Breast epithelium (tissue), 4 donors: ENCODE measurements at regions of chr13 and their contacts with region 1.

Region 1: DNA sequence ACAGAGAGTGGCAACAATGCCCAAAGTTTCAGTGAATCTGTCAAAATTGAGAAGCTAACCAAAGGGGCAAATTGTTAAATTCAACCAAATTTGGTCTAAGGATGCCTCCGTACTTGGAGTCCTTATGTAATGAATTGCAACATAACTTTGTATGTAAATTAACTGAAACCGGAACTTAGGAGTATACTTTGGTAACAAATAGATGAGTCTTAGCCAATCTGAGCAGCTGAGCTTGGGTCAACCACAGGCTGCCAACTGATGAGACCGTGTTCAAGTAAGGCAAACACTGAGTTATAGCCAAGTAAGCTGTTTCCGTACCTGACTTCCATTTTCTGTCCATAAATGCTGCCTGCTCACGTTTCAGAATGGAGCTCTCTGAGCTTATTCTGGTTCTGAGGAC is 5.3 kb downstream of the VWA8 start:
- DNase-seq: no peak
- H3K4me3 ChIP-seq: no peak overlapping the region
- H3K27ac ChIP-seq: no peak overlapping the region
- H3K4me1 ChIP-seq: no peaks in the 10 kb centered on the region
- H3K27me3 ChIP-seq: no peaks in the 10 kb centered on the region
- CTCF ChIP-seq: no peak
- POLR2A ChIP-seq: no peak

Region 2: DNA sequence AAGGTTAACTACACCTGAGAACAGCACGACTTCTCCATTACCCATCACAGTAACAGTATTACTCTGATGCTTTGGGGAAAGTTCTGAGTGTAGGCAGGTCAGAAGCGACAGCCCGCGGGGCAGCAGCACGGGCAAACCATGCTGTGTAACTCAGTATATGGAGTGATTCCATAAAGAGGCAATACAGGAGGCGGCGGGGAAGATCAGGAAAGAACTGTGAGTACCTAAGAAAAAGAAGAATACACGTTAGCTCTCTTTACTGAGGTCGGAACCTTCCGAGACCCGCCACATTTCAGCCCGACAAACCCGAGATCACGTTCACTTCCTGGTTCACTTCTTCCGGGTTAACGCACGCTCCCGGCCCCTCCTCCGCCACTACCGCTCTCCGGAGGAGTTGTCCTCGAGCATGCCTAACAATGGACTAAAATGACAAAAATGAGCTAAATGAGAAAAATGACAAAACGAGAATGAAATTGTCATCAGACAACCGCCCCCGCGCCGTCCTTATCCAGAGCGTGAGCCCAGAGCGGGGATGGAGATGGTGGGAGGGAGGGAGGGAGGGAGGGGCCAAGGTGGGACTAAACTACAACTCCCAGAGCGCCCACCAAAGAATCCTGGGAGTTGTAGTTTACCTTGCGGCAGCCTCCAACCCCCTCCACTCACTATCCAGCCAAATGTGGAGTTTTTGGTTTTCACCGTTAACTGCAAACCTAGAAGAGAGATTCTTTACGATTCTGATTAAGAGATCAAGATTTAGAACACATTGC is 692.2 kb before region 1 on chr13 and contains the start of gene MTRF1:
- intact Hi-C with region 1: no loop called
- DNase-seq: peak; percentile 63 to 67
- H3K4me3 ChIP-seq: peak within 1 kb of the TSS; percentile 46 to 82 (median 69)
- H3K27ac ChIP-seq: peak within 1 kb of the TSS; percentile 84 to 87
- H3K4me1 ChIP-seq: peaks cover 0 to 5% of the 10 kb centered on the region in 2 donors
- H3K27me3 ChIP-seq: no peaks in the 10 kb centered on the region
- CTCF ChIP-seq: no peak
- POLR2A ChIP-seq: no peak
- total RNA-seq, gene MTRF1: 10.4 to 18.6 (median 12.8) TPM

Region 3: GRCh38 chr13:42333613-42334328 is 378.2 kb after region 1 on chr13:
- intact Hi-C with region 1: loop called (anchors 5 kb)
- DNase-seq: no peak
- H3K4me3 ChIP-seq: no peak overlapping the region
- H3K27ac ChIP-seq: no peak overlapping the region
- H3K4me1 ChIP-seq: no peaks in the 10 kb centered on the region
- H3K27me3 ChIP-seq: no peaks in the 10 kb centered on the region
- CTCF ChIP-seq: no peak
- POLR2A ChIP-seq: no peak